CD8-positive, alpha-beta T cell (primary cell): ENCODE measurements at regions of chr1 and their contacts with region 1.

Region 1: DNA sequence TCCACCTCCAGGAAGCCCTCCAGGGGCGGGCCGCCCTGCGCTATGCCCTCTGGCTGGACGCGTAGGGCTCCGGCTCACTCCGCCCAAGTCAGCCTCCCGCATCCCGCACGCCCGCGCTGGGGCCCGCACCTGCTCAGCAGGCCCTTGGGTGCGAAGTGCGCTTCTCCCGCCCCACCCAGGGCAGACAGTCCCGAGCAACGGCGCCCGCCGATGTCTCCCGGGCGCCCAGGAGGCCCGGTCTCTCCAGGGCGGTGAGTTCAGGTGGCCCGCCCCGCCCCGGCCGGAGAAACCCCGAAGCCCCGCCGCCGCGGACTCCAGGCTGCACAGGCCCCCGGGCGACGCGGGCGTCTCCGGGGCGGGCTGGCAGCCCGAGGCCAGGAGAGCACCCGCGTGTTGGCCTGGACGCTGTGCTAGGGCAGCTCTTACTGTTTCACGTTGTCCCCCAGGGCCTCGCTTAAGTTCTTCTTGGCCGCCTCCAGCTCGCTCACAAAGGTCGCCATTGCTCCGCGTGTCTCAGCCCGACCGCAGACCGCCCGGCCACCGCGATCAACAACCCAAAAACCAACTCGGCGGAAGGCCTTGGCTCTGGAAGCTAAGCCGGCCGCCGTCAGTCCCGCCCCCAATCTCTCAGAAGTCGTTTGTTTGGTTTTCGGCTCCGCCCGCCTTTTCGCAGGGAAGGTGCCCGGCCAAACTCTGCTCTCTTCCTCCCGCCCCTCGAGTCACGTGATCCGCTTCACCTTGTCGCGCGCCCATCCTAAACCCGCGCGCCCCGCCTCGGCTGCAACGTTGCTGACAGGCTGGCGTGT is at the start of gene TADA1:
- DNase-seq: peak; percentile 96 to 99 (median 98)
- ATAC-seq: peak; percentile 90
- H3K4me3 ChIP-seq: peak within 1 kb of the TSS; percentile 71 to 84
- H3K4me3 Mint-ChIP-seq: peak within 1 kb of the TSS; percentile 97
- H3K27ac ChIP-seq: peak within 1 kb of the TSS; percentile 74 to 79
- H3K27ac Mint-ChIP-seq: peak within 1 kb of the TSS; percentile 99
- H3K4me1 ChIP-seq: peaks cover 18% of the 10 kb centered on the region
- H3K4me1 Mint-ChIP-seq: peaks cover 49% of the 10 kb centered on the region
- H3K27me3 ChIP-seq: no peaks in the 10 kb centered on the region
- H3K27me3 Mint-ChIP-seq: no peaks in the 10 kb centered on the region
- CTCF ChIP-seq: no peak
- total RNA-seq, gene TADA1: 16.7 to 18.5 TPM

Region 2: GRCh38 chr1:165697881-165698760 is 1177.8 kb before region 1 on chr1 and contains the start of gene ALDH9A1:
- CTCF ChIA-PET with region 1: no interaction called
- POLR2A ChIA-PET with region 1: no interaction called
- intact Hi-C with region 1: loop called in 1 of 2 experiments (anchors 10 kb)
- DNase-seq: peak; percentile 74 to 90 (median 82)
- ATAC-seq: peak; percentile 87
- H3K4me3 ChIP-seq: peak within 1 kb of the TSS; percentile 65 to 87
- H3K4me3 Mint-ChIP-seq: peak within 1 kb of the TSS; percentile 98
- H3K27ac ChIP-seq: peak within 1 kb of the TSS; percentile 80 to 91
- H3K27ac Mint-ChIP-seq: peak within 1 kb of the TSS; percentile 95
- H3K4me1 ChIP-seq: peaks cover 25% of the 10 kb centered on the region
- H3K4me1 Mint-ChIP-seq: peaks cover 39% of the 10 kb centered on the region
- H3K27me3 ChIP-seq: peaks cover 0 to under 1% of the 10 kb centered on the region in 2 experiments
- H3K27me3 Mint-ChIP-seq: peaks cover 2% of the 10 kb centered on the region
- CTCF ChIP-seq: no peak
- total RNA-seq, gene ALDH9A1: 18.7 to 22.0 TPM

Region 3: GRCh38 chr1:165768513-165769394 is 1107.2 kb before region 1 on chr1 and contains the start of gene TMCO1:
- CTCF ChIA-PET with region 1: interaction called, 3 read pairs
- POLR2A ChIA-PET with region 1: no interaction called
- intact Hi-C with region 1: loop called in 1 of 2 experiments (anchors 10 kb)
- DNase-seq: peak; percentile 84 to 99 (median 92)
- ATAC-seq: peak; percentile 93
- H3K4me3 ChIP-seq: peak within 1 kb of the TSS; percentile 85 to 93
- H3K4me3 Mint-ChIP-seq: peak within 1 kb of the TSS; percentile 99
- H3K27ac ChIP-seq: peak within 1 kb of the TSS; percentile 71 to 96
- H3K27ac Mint-ChIP-seq: peak within 1 kb of the TSS; percentile 99
- H3K4me1 ChIP-seq: peaks cover 50% of the 10 kb centered on the region
- H3K4me1 Mint-ChIP-seq: peaks cover 65% of the 10 kb centered on the region
- H3K27me3 ChIP-seq: no peaks in the 10 kb centered on the region
- H3K27me3 Mint-ChIP-seq: no peaks in the 10 kb centered on the region
- CTCF ChIP-seq: peak; percentile 24
- total RNA-seq, gene TMCO1: 30.5 to 33.5 TPM

Region 4: DNA sequence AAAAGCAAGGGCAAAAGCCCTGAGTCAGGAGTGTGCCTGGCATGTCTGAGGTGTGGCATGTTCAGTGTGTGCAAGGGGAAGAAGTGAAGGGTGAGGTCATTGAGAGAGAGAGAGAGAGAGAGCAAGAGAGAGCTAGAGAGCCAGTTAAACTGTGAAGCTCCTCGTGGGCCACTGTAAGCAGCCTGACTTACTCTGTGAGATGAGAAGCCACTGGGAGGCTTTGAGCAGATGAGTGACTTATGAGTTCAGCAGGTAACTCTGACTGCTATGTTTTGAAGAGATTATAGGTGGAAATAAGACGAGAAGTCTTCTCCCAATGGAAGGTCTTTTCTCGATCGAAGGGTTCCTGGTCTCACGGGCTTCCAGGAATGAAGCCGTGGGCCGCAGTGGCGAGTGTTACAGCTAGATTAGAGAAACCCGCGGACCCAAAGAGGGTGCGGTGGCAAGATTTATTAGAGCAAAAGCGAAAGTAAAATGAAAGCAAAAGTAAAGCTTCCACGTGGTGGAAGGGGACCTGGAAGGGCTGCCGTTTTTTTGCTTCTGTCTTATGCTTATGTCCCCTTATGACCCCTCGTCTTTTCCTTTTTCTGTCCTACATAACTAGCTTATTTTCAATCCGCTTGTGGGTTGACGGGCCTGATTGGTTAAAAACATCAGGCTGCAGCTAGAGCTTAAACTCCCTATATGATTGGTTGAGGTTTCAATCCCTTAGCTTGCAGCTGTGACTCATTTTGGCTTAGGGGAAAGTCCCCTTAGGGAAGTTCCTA is 386.1 kb before region 1 on chr1:
- CTCF ChIA-PET with region 1: no interaction called
- POLR2A ChIA-PET with region 1: interaction called, 3 read pairs
- intact Hi-C with region 1: loop called in 1 of 2 experiments (anchors 10 kb)
- DNase-seq: peak; percentile 7 to 87 (median 44)
- ATAC-seq: peak; percentile 86
- H3K4me3 ChIP-seq: peak overlapping the region; percentile 67 to 95
- H3K4me3 Mint-ChIP-seq: no peak overlapping the region
- H3K27ac ChIP-seq: peak overlapping the region; percentile 89 to 95
- H3K27ac Mint-ChIP-seq: no peak overlapping the region
- H3K4me1 ChIP-seq: peaks cover 23% of the 10 kb centered on the region
- H3K4me1 Mint-ChIP-seq: peaks cover 16% of the 10 kb centered on the region
- H3K27me3 ChIP-seq: no peaks in the 10 kb centered on the region
- H3K27me3 Mint-ChIP-seq: no peaks in the 10 kb centered on the region
- CTCF ChIP-seq: no peak

Region 5: GRCh38 chr1:166838766-166839599 is 37.0 kb before region 1 on chr1 and contains the start of gene POGK:
- CTCF ChIA-PET with region 1: no interaction called
- POLR2A ChIA-PET with region 1: interaction called, 23 read pairs
- intact Hi-C with region 1: loop called (anchors 1 kb)
- DNase-seq: peak; percentile 56 to 92 (median 80)
- ATAC-seq: peak; percentile 88
- H3K4me3 ChIP-seq: peak within 1 kb of the TSS; percentile 68 to 72
- H3K4me3 Mint-ChIP-seq: peak within 1 kb of the TSS; percentile 92
- H3K27ac ChIP-seq: peak within 1 kb of the TSS; percentile 71 to 75
- H3K27ac Mint-ChIP-seq: peak within 1 kb of the TSS; percentile 98
- H3K4me1 ChIP-seq: peaks cover 28% of the 10 kb centered on the region
- H3K4me1 Mint-ChIP-seq: peaks cover 41% of the 10 kb centered on the region
- H3K27me3 ChIP-seq: no peaks in the 10 kb centered on the region
- H3K27me3 Mint-ChIP-seq: no peaks in the 10 kb centered on the region
- CTCF ChIP-seq: no peak
- total RNA-seq, gene POGK: 14.9 to 16.1 TPM

Region 6: GRCh38 chr1:166895793-166896192 is 19.9 kb after region 1 on chr1:
- CTCF ChIA-PET with region 1: no interaction called
- POLR2A ChIA-PET with region 1: no interaction called
- intact Hi-C with region 1: no loop called
- DNase-seq: no peak
- ATAC-seq: no peak
- H3K4me3 ChIP-seq: no peak overlapping the region
- H3K4me3 Mint-ChIP-seq: no peak overlapping the region
- H3K27ac ChIP-seq: no peak overlapping the region
- H3K27ac Mint-ChIP-seq: no peak overlapping the region
- H3K4me1 ChIP-seq: no peaks in the 10 kb centered on the region
- H3K4me1 Mint-ChIP-seq: no peaks in the 10 kb centered on the region
- H3K27me3 ChIP-seq: no peaks in the 10 kb centered on the region
- H3K27me3 Mint-ChIP-seq: peaks cover 24% of the 10 kb centered on the region
- CTCF ChIP-seq: no peak

Region 7: DNA sequence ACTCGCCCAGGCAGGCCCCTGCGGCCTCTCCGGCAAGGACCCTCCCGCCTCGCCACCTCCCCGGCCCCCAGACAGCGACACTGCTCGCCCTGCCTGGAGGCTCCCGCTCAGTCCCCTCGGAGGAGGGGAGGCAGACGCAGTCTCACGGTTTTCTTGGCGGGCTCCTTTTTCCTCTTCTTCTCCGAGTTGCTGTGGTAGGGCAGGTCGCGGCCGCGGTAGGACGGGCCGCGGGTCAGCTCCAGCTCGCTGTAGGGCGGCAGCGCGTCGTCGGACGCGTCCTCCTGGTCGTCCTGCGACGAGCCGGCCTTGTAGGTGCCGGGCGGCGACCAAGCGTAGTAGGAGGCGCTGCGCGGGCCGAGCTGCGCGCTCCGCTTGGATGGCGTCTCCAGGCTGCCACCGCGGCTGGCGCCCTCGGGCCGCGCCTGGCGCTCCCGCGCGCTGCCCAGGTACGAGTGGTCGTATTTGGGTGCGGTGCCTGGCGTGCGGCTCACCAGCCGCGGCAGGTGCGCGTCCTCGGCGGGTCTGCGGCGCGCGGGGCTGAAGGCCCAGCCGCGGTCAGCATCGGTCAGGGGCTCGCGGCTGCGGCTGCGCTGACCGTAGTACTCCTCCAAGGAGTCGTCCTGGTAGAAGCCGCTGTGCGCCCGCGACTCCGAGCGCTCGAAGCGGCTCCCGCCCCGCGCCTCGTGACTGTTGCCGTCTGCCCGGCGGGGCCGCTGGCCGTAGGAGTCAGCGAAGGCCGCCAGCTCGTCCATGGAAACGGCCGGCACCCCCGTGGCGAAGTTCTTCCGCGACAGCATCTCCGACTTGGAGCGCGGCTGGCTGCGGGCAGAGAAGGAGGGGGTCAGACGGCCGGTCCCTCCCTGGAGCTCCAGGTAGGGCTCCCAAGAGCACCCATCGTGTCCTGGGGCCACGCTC is 44.9 kb after region 1 on chr1:
- CTCF ChIA-PET with region 1: no interaction called
- POLR2A ChIA-PET with region 1: no interaction called
- intact Hi-C with region 1: no loop called
- DNase-seq: peak in 1 of 9 experiments; percentile 4
- ATAC-seq: no peak
- H3K4me3 ChIP-seq: no peak overlapping the region
- H3K4me3 Mint-ChIP-seq: no peak overlapping the region
- H3K27ac ChIP-seq: no peak overlapping the region
- H3K27ac Mint-ChIP-seq: no peak overlapping the region
- H3K4me1 ChIP-seq: no peaks in the 10 kb centered on the region
- H3K4me1 Mint-ChIP-seq: peaks cover 7% of the 10 kb centered on the region
- H3K27me3 ChIP-seq: peaks cover 5 to 22% of the 10 kb centered on the region in 2 experiments
- H3K27me3 Mint-ChIP-seq: peaks cover 41% of the 10 kb centered on the region
- CTCF ChIP-seq: no peak

Region 8: GRCh38 chr1:167553136-167554027 is 677.4 kb after region 1 on chr1 and contains the start of gene CREG1:
- CTCF ChIA-PET with region 1: no interaction called
- POLR2A ChIA-PET with region 1: no interaction called
- intact Hi-C with region 1: loop called in 1 of 2 experiments (anchors 10 kb)
- DNase-seq: peak; percentile 70 to 93 (median 88)
- ATAC-seq: peak; percentile 97
- H3K4me3 ChIP-seq: peak within 1 kb of the TSS; percentile 62 to 70
- H3K4me3 Mint-ChIP-seq: peak within 1 kb of the TSS; percentile 88
- H3K27ac ChIP-seq: peak within 1 kb of the TSS in 1 of 2 experiments; percentile 57
- H3K27ac Mint-ChIP-seq: no peak within 1 kb of the TSS
- H3K4me1 ChIP-seq: peaks cover 18% of the 10 kb centered on the region
- H3K4me1 Mint-ChIP-seq: peaks cover 47% of the 10 kb centered on the region
- H3K27me3 ChIP-seq: no peaks in the 10 kb centered on the region
- H3K27me3 Mint-ChIP-seq: no peaks in the 10 kb centered on the region
- CTCF ChIP-seq: no peak
- total RNA-seq, gene CREG1: 9.3 to 9.8 TPM

Region 9: GRCh38 chr1:167627865-167628641 is 752.1 kb after region 1 on chr1:
- CTCF ChIA-PET with region 1: no interaction called
- POLR2A ChIA-PET with region 1: no interaction called
- intact Hi-C with region 1: loop called in 1 of 2 experiments (anchors 10 kb)
- DNase-seq: peak; percentile 44 to 91 (median 73)
- ATAC-seq: peak; percentile 67
- H3K4me3 ChIP-seq: peak overlapping the region; percentile 28 to 96
- H3K4me3 Mint-ChIP-seq: peak overlapping the region; percentile 89
- H3K27ac ChIP-seq: peak overlapping the region; percentile 46 to 94
- H3K27ac Mint-ChIP-seq: peak overlapping the region; percentile 96
- H3K4me1 ChIP-seq: peaks cover 50% of the 10 kb centered on the region
- H3K4me1 Mint-ChIP-seq: peaks cover 63% of the 10 kb centered on the region
- H3K27me3 ChIP-seq: no peaks in the 10 kb centered on the region
- H3K27me3 Mint-ChIP-seq: no peaks in the 10 kb centered on the region
- CTCF ChIP-seq: no peak